ENCODE measurements at regions of chr17 and their contacts with region 1.

Region 1: GRCh38 chr17:70622368-70623260 is 453.3 kb downstream of the KCNJ2 start:
- DNase-seq: peak; percentile 46
- ATAC-seq: peak; percentile 92

Region 2: GRCh38 chr17:69567130-69567529 is 1055.5 kb before region 1 on chr17:
- intact Hi-C with region 1: loop called (anchors 10 kb)
- DNase-seq: no peak
- ATAC-seq: no peak